MCF 10A (cell line): ENCODE measurements at regions of chr21 and their contacts with region 1.

Region 1: GRCh38 chr21:33894736-33895288 is 20.8 kb downstream of the ATP5PO start:
- DNase-seq: peak; percentile 68
- H3K4me3 Mint-ChIP-seq: no peak overlapping the region
- H3K27ac Mint-ChIP-seq: no peak overlapping the region
- H3K4me1 Mint-ChIP-seq: peaks cover 7% of the 10 kb centered on the region
- H3K27me3 Mint-ChIP-seq: no peaks in the 10 kb centered on the region
- CTCF ChIP-seq: peak; percentile 36

Region 2: DNA sequence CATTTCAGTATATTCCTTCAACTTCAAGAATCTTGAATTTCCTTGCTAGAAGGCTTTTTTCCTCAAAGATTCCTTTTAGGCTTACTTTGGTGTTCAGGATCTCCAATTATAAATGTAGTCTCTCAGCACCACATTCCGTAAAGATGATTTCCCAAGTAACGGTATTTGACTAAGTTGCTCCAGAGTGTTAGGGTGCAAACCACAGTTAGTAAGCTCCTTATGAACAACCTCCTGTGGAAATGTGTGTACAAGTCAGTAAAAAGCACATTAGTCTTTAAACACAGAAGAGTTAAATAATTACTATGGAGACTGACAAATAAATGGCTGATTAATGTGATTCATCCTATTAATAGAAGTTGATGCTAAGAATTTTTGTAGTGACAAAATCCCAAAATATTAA is 316.6 kb before region 1 on chr21:
- CTCF ChIA-PET with region 1: no interaction called
- POLR2A ChIA-PET with region 1: no interaction called
- intact Hi-C with region 1: no loop called
- DNase-seq: no peak
- H3K4me3 Mint-ChIP-seq: no peak overlapping the region
- H3K27ac Mint-ChIP-seq: no peak overlapping the region
- H3K4me1 Mint-ChIP-seq: no peaks in the 10 kb centered on the region
- H3K27me3 Mint-ChIP-seq: no peaks in the 10 kb centered on the region
- CTCF ChIP-seq: no peak

Region 3: DNA sequence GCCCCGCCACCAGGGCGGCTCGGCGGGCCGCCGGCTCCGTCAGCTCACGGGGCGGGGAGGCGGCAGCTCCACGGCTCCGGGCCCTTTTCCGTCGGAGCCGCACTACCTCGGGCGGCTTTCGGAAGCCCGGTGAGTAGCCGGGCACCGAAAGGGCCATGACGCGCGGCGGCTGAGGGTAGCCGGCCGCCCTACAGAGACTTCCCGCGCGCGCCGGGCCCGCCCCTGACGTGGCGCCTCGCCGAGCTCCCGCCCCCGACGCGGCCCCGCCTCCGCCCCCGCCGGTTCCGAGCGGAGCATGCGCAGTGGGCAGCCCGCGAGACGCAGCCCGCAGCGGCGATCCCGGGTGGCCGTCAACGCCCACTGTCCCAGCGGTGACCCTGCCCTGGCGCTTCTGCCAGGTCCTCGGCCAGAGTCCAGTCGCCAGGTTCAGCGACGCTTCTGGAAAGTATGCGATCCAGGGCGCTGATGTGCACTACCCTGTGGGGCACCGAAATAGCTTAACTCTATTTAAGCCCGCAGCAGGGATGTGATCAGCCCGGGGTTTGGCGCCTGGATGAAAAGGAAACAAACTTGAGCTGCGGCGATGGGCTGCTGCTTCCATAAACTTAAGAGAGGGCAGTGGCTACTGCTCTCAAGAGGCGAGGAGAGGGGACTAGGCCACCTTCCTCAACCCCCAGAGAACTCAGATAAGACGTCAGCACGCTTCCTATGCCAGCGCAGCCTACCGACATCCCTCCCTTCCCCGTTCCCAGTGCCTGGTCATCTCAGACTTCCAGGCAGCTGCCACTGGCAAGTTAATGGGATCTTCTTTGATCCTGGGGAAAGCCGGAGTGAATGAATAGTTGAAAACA is 306.1 kb before region 1 on chr21 and contains the start of gene DONSON:
- CTCF ChIA-PET with region 1: no interaction called
- POLR2A ChIA-PET with region 1: no interaction called
- intact Hi-C with region 1: loop called (anchors 5 kb)
- DNase-seq: peak; percentile 80
- H3K4me3 Mint-ChIP-seq: peak within 1 kb of the TSS; percentile 88
- H3K27ac Mint-ChIP-seq: peak within 1 kb of the TSS; percentile 67
- H3K4me1 Mint-ChIP-seq: peaks cover 5% of the 10 kb centered on the region
- H3K27me3 Mint-ChIP-seq: no peaks in the 10 kb centered on the region
- CTCF ChIP-seq: no peak
- total RNA-seq, gene DONSON: 9.3 and 10.0 TPM in 2 replicates

Region 4: GRCh38 chr21:33976082-33977016 is 81.5 kb after region 1 on chr21:
- CTCF ChIA-PET with region 1: no interaction called
- POLR2A ChIA-PET with region 1: no interaction called
- intact Hi-C with region 1: no loop called
- DNase-seq: peak; percentile 92
- H3K4me3 Mint-ChIP-seq: peak overlapping the region; percentile 60
- H3K27ac Mint-ChIP-seq: peak overlapping the region; percentile 98
- H3K4me1 Mint-ChIP-seq: peaks cover 41% of the 10 kb centered on the region
- H3K27me3 Mint-ChIP-seq: no peaks in the 10 kb centered on the region
- CTCF ChIP-seq: no peak